AG04449 (cell line): ENCODE measurements at regions of chr17 and their contacts with region 1.

Region 1: GRCh38 chr17:42312285-42313130 is 24.2 kb downstream of the STAT5A start:
- DNase-seq: no peak
- H3K4me3 ChIP-seq: no peak overlapping the region
- CTCF ChIP-seq: peak; percentile 89

Region 2: DNA sequence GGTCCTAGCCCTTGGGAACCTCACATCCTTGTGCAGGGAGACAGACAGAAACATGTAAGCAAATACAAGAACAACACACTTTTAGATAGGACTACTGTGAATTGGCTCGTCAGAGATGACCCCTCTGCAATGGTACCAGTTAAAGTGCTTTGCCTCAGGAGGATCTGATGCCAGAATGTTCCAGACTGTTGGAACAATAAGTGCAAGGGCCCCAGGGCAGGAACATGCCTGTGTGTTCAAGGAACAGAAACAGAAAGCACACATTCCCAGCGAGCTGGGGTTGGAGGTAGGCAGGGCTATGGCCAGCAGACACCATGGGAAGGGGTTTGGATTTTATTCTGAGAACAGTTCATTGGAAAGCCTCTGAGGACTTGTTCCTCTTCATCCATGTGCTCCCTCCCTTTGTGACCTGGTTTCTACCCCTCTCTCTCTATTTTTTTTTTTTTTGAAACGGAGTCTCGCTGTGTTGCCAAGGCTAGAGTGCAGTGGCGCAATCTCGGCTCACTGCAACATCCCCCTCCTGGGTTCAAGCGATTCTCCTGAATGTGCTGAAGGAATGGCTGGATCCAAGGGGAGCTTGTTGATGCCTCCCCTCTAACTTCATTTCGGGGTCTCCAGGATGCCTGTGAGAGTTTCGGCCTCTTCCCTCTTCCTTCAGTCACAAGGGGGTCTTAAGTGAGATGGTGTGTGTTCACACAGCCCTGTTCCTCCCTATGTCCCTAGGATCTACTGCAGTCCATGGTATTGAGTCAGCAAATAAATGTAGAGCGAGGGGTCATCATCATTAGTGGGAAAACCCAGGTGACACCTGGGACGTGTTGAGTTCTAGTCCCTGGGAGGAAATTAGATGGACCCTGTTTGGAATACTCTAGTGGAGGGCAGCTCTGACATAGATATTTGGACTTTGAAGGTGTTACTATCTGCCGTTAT is 17.8 kb before region 1 on chr17:
- CTCF ChIA-PET with region 1: interaction called, 13 read pairs
- POLR2A ChIA-PET with region 1: interaction called, 3 read pairs
- DNase-seq: no peak
- H3K4me3 ChIP-seq: no peak overlapping the region
- CTCF ChIP-seq: no peak